Adrenal gland (tissue), 19 donors: ENCODE measurements at regions of chr6 and their contacts with region 1.

Region 1: GRCh38 chr6:2353412-2354137 is 108.2 kb upstream of the GMDS start:
- DNase-seq: peak; percentile 67 to 90 (median 78)
- H3K4me3 ChIP-seq: no peak overlapping the region
- H3K27ac ChIP-seq: peak overlapping the region in 1 of 5 donors; percentile 30
- H3K4me1 ChIP-seq: peaks cover 0 to 9% of the 10 kb centered on the region in 2 donors
- H3K27me3 ChIP-seq: no peaks in the 10 kb centered on the region
- CTCF ChIP-seq: peak; percentile 53 to 90 (median 82)
- POLR2A ChIP-seq: no peak

Region 2: DNA sequence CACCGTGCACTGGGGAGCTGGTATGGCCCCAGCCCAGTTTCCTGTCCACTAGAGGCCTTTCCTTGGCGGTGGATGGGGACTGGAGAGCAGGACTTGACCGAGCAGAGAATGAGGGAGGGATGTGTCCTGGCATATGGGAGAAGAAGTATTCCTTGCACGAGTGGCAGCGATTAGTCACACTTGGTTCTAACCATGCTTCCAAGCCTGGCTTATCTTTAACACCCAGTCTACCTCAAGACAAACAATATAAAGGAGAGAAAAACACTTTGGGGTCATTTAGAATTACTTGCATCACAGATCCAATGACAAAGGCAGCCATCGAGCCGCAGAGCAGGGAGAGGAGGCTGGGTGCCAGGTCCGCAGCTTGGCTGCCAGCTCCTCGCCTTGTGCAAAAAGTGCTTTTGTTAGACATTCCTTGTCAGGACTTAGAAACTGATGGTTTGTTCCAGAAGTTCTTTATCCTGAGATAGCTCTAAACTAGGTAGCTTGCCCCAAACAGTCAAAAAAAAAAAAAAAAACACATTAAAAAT is 106.7 kb after region 1 on chr6:
- intact Hi-C with region 1: no loop called
- DNase-seq: no peak
- H3K4me3 ChIP-seq: no peak overlapping the region
- H3K27ac ChIP-seq: no peak overlapping the region
- H3K4me1 ChIP-seq: no peaks in the 10 kb centered on the region
- H3K27me3 ChIP-seq: no peaks in the 10 kb centered on the region
- CTCF ChIP-seq: no peak
- POLR2A ChIP-seq: no peak

Region 3: DNA sequence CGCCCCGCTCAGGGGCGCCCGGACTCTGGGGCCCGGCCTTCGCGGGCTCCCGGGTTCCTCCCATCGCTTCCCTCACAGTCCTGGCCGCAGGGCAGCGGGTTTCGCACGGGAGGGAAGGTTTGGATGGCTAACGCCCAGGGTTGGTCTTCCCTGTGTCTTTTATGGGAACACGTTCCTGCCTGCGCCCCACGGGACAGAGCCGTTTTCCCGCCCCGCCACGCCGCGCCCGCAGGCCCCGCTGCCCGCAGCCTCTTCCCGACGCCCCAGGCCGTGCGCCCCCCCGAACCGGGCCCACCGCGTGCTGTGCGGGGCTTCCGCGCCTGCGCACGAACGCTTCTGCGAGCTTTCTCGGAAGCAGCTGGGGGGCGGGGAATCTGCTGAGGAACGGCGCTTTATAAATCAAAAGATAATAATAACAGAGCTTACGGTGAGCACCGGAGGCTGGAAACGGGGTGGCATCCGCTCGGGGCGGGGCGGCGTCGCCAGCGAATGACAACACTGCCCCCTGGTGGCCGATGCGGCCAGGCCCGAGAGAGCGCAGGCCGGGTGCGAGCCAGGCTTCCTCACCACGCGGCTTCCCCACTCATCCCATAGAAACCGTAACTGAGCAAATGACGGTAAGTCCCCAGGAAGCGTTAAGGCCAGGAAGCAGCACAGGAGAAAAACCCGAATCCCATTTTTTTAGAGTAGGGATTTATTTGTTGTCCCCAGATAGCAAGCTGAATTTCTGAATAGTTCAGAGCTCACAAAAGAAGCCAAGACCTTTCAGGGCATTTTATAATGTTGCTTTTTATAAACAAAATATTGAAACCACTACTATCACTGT is 280.8 kb after region 1 on chr6:
- intact Hi-C with region 1: loop called in 1 of 2 experiments (anchors 10 kb)
- DNase-seq: peak; percentile 83 to 93 (median 90)
- H3K4me3 ChIP-seq: peak overlapping the region in 2 of 4 donors; percentile 18 to 55
- H3K27ac ChIP-seq: peak overlapping the region in 3 of 5 donors; percentile 34 to 80 (median 73)
- H3K4me1 ChIP-seq: peaks cover 9 to 19% of the 10 kb centered on the region in 2 donors
- H3K27me3 ChIP-seq: no peaks in the 10 kb centered on the region
- CTCF ChIP-seq: peak; percentile 88 to 99 (median 97)
- POLR2A ChIP-seq: no peak